ENCODE measurements at regions of chr5 and their contacts with region 1.

Region 1: GRCh38 chr5:138503487-138504270 is 38.4 kb downstream of the EGR1 start:
- DNase-seq: peak in 2 of 5 donors; percentile 50 to 52
- H3K4me3 ChIP-seq: no peak overlapping the region
- H3K4me3 Mint-ChIP-seq: no peak overlapping the region
- H3K27ac ChIP-seq: no peak overlapping the region
- H3K27ac Mint-ChIP-seq: peak overlapping the region in 5 of 8 donors; percentile 7 to 77 (median 27)
- H3K4me1 ChIP-seq: no peaks in the 10 kb centered on the region
- H3K4me1 Mint-ChIP-seq: peaks cover 3 to 5% (median 4%) of the 10 kb centered on the region in 3 donors
- H3K27me3 ChIP-seq: no peaks in the 10 kb centered on the region
- H3K27me3 Mint-ChIP-seq: no peaks in the 10 kb centered on the region

Region 2: GRCh38 chr5:138458384-138458783 is 45.3 kb before region 1 on chr5:
- CTCF ChIA-PET with region 1: interaction called, 155 read pairs
- POLR2A ChIA-PET with region 1: interaction called, 6 read pairs
- DNase-seq: no peak
- H3K4me3 ChIP-seq: no peak overlapping the region
- H3K4me3 Mint-ChIP-seq: peak overlapping the region in 1 of 7 donors; percentile 61
- H3K27ac ChIP-seq: no peak overlapping the region
- H3K27ac Mint-ChIP-seq: peak overlapping the region in 5 of 8 donors; percentile 98 to 100 (median 98)
- H3K4me1 ChIP-seq: peaks cover 33% of the 10 kb centered on the region
- H3K4me1 Mint-ChIP-seq: peaks cover 31 to 42% (median 36%) of the 10 kb centered on the region in 3 donors
- H3K27me3 ChIP-seq: no peaks in the 10 kb centered on the region
- H3K27me3 Mint-ChIP-seq: no peaks in the 10 kb centered on the region

Region 3: DNA sequence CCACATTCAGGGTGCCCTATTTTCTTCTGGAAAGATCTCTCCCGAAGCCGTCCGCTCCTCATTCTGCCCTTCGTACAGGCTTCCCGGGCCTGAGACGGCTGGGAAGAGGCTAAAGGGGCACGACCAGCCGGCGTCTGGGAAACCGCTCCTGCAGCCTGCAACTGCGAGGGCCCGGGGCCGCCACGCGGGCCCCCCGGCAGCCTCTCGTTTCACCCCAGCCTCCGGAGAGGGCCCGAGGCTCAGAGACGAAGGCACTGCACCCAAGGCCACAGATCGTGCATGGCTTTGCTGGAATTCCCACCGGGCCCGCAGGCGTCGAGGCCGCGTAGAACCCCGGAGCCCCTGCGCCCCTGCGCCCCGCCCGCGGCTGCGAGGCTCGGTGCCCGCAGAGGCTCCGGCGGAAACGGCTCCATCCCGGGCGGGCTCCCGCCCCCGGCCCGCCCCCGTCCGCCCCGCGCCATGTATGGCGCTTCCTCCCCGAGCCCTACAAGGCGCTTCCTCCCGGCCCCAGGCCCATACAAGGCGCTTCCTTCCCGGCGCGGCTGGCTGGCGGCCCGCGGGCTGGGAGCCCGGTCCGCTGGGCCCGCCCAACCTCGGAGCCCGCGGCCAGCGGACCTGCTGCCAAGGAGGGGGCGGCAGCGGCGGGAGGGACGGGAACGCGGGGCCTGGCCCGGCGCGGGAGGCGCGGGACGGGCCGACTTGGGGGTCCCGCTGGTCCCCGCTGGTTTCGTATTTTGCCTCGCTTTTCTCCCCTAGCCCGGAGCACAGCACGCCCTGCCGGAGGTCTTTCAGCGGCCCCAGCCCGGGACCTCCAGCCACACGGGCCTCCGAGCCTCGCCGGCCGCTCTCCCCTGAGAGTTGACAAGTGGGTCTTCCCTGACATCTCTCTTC is 11.8 kb before region 1 on chr5:
- CTCF ChIA-PET with region 1: interaction called, 13 read pairs
- POLR2A ChIA-PET with region 1: no interaction called
- DNase-seq: peak; percentile 80 to 90 (median 84)
- H3K4me3 ChIP-seq: peak overlapping the region; percentile 62
- H3K4me3 Mint-ChIP-seq: peak overlapping the region; percentile 84 to 91 (median 87)
- H3K27ac ChIP-seq: peak overlapping the region; percentile 47
- H3K27ac Mint-ChIP-seq: peak overlapping the region in 5 of 8 donors; percentile 39 to 91 (median 72)
- H3K4me1 ChIP-seq: peaks cover 18% of the 10 kb centered on the region
- H3K4me1 Mint-ChIP-seq: peaks cover 8 to 20% (median 13%) of the 10 kb centered on the region in 3 donors
- H3K27me3 ChIP-seq: peaks cover 5% of the 10 kb centered on the region
- H3K27me3 Mint-ChIP-seq: peaks cover 9 to 31% of the 10 kb centered on the region in 2 donors

Measured in CD8-positive, alpha-beta memory T cell (primary cell).